Activated CD4-positive, alpha-beta memory T cell treated with anti-CD3 and anti-CD28 coated beads, Interleukin-2, amount 10 ng/mL, durations not matched to agents 7 days and 5 days (primary cell): ENCODE measurements at regions of chr2 and their contacts with region 1.

Region 1: DNA sequence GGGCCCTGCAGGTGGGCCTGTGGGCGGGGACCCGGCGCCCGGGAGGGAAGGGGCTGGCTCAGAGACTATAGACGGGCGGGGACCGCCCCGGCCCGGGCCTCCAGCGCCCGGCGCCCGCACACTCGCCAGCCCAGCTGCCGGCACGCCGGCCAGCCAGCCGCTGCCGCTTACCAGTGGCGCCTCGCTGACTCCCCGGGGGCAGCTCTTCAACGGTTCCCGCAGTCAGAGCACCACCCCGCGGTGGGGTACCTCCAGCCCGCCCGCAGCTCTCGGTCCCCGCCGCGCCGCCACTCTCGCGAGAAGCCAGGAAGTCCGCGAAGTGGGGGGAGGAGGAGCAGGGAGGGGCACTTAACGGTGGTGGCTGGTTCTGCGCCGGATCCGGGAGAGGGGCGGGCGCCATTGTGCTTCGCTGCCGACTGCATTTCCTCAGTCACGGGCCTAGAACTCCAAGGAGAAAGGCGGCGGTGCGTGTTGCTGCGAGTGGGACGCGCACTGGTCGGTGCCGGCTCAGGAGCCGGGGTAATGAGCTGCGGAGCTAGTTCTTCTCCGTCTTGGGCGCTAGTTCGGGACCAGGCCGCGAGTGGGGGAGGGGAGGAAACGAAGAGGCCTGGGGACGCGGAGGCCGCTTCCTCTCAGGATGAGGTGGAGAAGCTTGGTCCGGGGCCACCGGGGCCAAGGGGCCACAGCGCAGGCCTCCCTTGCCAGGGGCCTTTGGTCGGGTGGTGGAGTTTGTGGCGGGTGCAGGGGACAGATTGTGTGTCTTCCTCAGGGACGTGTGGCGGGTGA is at the start of gene MARCHF7:
- DNase-seq: peak; percentile 97
- H3K4me3 Mint-ChIP-seq: peak within 1 kb of the TSS; percentile 97
- H3K27ac Mint-ChIP-seq: peak within 1 kb of the TSS; percentile 99
- H3K4me1 Mint-ChIP-seq: peaks cover 51% of the 10 kb centered on the region
- H3K27me3 Mint-ChIP-seq: no peaks in the 10 kb centered on the region
- total RNA-seq, gene MARCHF7: 92.2 to 98.0 TPM

Region 2: DNA sequence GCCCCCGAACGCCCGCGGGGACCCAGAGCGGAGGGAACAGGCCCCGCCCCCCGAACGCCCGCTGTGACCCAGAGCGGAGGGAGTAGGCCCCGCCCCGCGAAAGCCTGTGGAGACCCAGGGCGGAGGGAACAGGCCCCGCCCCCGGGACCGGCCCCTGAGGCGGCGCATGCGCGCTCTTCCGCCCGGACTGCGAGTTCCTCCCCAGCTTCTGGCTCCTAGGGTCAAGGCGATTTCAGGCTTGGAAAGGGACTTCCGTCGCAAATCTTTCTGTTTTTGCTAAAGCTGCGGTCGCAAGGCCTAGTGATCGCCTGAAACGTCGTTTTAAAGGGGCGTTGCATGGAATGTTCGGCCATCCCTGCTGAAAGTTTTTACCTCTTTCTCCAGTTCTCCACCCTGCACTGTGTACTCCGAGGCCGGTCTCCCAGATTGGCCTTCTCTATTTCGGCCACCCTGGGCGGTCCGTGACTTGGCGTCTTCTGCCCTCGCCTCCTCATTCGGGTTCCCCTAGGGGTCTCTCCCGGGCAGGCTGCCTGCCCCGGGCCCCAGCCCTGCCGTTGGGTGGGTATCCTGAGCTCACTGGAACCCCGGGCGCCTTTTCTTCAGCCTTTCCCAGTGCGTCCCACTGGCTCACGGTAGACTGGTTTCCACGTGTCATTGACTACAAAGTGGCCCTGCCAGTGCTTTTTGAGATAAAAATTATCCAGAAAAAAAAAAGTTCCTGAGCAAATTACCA is 425.5 kb before region 1 on chr2:
- CTCF ChIA-PET with region 1: no interaction called
- POLR2A ChIA-PET with region 1: interaction called, 24 read pairs
- DNase-seq: peak; percentile 97
- H3K4me3 Mint-ChIP-seq: peak overlapping the region; percentile 78
- H3K27ac Mint-ChIP-seq: peak overlapping the region; percentile 52
- H3K4me1 Mint-ChIP-seq: peaks cover 23% of the 10 kb centered on the region
- H3K27me3 Mint-ChIP-seq: no peaks in the 10 kb centered on the region

Region 3: DNA sequence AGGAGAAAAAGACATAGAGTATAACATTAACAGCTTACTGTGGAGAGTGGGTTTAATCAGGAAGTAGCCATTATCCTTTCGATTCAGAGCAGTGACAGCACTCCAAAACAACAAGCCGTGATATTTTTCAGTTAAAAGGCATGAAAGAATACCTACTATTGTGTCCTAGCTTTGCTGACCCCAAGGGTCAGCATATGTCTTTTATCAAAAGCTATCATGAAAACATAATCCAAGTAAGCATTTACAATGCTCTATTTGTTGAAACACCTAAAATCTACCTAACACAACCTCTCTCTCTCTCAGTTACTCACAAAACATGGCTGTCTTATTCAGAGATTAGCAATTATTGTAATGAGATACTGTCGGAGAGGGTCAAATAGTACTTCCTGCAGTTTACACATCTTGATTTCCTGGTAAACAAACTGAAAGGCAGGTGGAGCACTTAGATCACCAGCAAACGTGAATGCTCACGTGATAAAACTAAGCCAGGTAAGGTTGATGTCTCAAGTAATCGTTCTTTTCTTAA is 196.0 kb before region 1 on chr2:
- CTCF ChIA-PET with region 1: interaction called, 3 read pairs
- POLR2A ChIA-PET with region 1: interaction called, 42 read pairs
- DNase-seq: no peak
- H3K4me3 Mint-ChIP-seq: peak overlapping the region; percentile 71
- H3K27ac Mint-ChIP-seq: peak overlapping the region; percentile 66
- H3K4me1 Mint-ChIP-seq: peaks cover 13% of the 10 kb centered on the region
- H3K27me3 Mint-ChIP-seq: no peaks in the 10 kb centered on the region

Region 4: DNA sequence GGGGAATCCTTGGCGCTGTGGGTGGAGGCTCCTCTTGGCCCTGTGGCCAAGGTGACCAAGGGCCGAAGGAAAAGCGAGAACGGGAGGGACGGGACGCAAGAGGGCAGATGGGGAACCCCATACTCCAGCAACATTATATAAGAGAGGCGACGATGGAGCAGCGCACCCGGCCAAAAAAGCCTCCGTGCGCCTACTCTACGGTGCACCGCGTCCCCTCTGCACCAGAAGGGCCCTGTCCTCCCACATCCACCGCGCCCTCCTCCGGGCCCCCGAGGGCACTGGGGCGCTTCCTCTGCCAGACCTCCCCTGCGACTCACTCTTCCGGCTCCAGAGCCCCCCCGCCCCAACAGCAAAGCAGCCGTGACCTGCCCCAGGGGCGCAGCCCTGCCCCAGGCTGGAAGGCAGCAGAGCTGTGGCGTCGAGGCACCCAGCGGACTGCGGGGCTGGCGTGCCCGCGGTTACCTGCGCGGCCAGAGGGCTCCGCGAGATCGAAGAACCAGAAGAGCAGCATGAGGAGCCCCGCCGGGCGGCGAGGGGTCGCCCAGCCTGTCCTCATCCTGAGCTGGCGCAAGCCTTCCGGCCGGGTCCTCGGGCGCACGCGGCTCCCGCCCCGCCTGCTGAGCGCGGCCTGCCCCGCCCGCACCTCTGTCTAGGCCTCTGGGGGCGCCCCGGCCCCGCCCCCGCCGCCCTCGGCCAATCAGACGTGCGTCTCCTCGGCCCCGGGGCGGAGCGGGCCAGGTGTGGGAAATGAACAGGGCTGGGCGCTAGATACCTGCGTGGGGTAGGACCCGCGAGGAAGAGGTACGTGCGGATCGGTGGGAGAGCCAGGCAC is 192.0 kb after region 1 on chr2:
- CTCF ChIA-PET with region 1: no interaction called
- POLR2A ChIA-PET with region 1: interaction called, 35 read pairs
- DNase-seq: peak; percentile 81
- H3K4me3 Mint-ChIP-seq: peak within 1 kb of the TSS; percentile 98
- H3K27ac Mint-ChIP-seq: peak within 1 kb of the TSS; percentile 94
- H3K4me1 Mint-ChIP-seq: peaks cover 37% of the 10 kb centered on the region
- H3K27me3 Mint-ChIP-seq: no peaks in the 10 kb centered on the region